ENCODE measurements at regions of chr3 and their contacts with region 1.

Region 1: GRCh38 chr3:19543212-19543841 is 390.7 kb downstream of the EFHB start:
- DNase-seq: peak; percentile 21
- ATAC-seq: peak; percentile 57
- H3K4me3 Mint-ChIP-seq: peak overlapping the region; percentile 21
- H3K27ac Mint-ChIP-seq: peak overlapping the region; percentile 95
- H3K4me1 Mint-ChIP-seq: peaks cover 69% of the 10 kb centered on the region
- H3K27me3 Mint-ChIP-seq: no peaks in the 10 kb centered on the region
- CTCF ChIP-seq: peak; percentile 27

Region 2: GRCh38 chr3:18559331-18559842 is 983.9 kb before region 1 on chr3:
- CTCF ChIA-PET with region 1: no interaction called
- POLR2A ChIA-PET with region 1: no interaction called
- intact Hi-C with region 1: loop called (anchors 5 kb)
- DNase-seq: no peak
- ATAC-seq: peak; percentile 65
- H3K4me3 Mint-ChIP-seq: no peak overlapping the region
- H3K27ac Mint-ChIP-seq: no peak overlapping the region
- H3K4me1 Mint-ChIP-seq: peaks cover 27% of the 10 kb centered on the region
- H3K27me3 Mint-ChIP-seq: no peaks in the 10 kb centered on the region
- CTCF ChIP-seq: no peak

Region 3: GRCh38 chr3:19046440-19046839 is 496.9 kb before region 1 on chr3:
- CTCF ChIA-PET with region 1: no interaction called
- POLR2A ChIA-PET with region 1: no interaction called
- intact Hi-C with region 1: loop called (anchors 1 kb)
- DNase-seq: no peak
- ATAC-seq: no peak
- H3K4me3 Mint-ChIP-seq: no peak overlapping the region
- H3K27ac Mint-ChIP-seq: no peak overlapping the region
- H3K4me1 Mint-ChIP-seq: no peaks in the 10 kb centered on the region
- H3K27me3 Mint-ChIP-seq: no peaks in the 10 kb centered on the region
- CTCF ChIP-seq: no peak

Region 4: GRCh38 chr3:19146685-19147650 is 396.4 kb before region 1 on chr3:
- CTCF ChIA-PET with region 1: interaction called, 9 read pairs
- POLR2A ChIA-PET with region 1: no interaction called
- intact Hi-C with region 1: loop called (anchors 1 kb)
- DNase-seq: peak; percentile 64
- ATAC-seq: peak; percentile 73
- H3K4me3 Mint-ChIP-seq: peak overlapping the region; percentile 95
- H3K27ac Mint-ChIP-seq: peak overlapping the region; percentile 85
- H3K4me1 Mint-ChIP-seq: peaks cover 14% of the 10 kb centered on the region
- H3K27me3 Mint-ChIP-seq: peaks cover 9% of the 10 kb centered on the region
- CTCF ChIP-seq: no peak

Region 5: DNA sequence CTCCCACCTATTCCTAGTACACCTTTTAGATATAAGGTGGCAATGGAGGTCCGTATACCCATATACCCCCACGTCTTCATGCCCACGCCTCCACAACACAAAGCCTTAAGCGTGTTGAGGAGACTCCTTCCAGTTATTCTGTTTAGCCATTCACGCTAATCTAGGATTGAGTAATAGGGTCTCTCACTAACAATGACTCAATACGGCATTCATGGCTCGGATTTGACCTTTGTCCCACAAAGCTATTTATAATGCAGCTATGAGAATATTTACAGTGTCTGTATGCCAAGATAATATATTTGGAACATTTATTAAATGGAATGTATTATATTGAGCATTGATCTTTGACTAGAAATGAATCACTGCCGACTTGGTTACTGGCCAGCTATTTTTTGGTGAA is 179.2 kb before region 1 on chr3:
- CTCF ChIA-PET with region 1: interaction called, 3 read pairs
- POLR2A ChIA-PET with region 1: no interaction called
- intact Hi-C with region 1: loop called (anchors 5 kb)
- DNase-seq: no peak
- ATAC-seq: no peak
- H3K4me3 Mint-ChIP-seq: no peak overlapping the region
- H3K27ac Mint-ChIP-seq: peak overlapping the region; percentile 25
- H3K4me1 Mint-ChIP-seq: peaks cover 39% of the 10 kb centered on the region
- H3K27me3 Mint-ChIP-seq: no peaks in the 10 kb centered on the region
- CTCF ChIP-seq: no peak

Region 6: DNA sequence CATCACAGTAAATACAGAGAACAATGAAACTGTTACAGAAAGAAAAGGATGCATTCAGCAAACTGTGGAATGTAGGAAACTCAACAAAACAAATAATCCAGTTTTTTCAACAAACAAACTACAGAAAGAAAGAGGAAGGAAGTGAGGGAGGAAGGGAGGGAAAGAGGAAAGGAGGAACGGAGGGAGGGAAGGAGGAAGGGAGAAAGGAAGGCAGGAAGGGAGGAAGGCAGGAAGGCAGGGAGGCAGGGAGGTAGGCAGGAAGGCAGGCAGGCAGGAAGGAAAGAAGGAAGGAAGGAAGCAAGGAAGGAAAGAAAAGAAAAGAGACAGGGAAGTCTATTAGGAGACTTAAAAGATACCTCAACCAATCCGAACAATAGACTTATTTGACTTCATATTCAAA is 255.0 kb after region 1 on chr3:
- CTCF ChIA-PET with region 1: no interaction called
- POLR2A ChIA-PET with region 1: no interaction called
- intact Hi-C with region 1: no loop called
- DNase-seq: no peak
- ATAC-seq: no peak
- H3K4me3 Mint-ChIP-seq: no peak overlapping the region
- H3K27ac Mint-ChIP-seq: no peak overlapping the region
- H3K4me1 Mint-ChIP-seq: no peaks in the 10 kb centered on the region
- H3K27me3 Mint-ChIP-seq: no peaks in the 10 kb centered on the region
- CTCF ChIP-seq: no peak

Region 7: DNA sequence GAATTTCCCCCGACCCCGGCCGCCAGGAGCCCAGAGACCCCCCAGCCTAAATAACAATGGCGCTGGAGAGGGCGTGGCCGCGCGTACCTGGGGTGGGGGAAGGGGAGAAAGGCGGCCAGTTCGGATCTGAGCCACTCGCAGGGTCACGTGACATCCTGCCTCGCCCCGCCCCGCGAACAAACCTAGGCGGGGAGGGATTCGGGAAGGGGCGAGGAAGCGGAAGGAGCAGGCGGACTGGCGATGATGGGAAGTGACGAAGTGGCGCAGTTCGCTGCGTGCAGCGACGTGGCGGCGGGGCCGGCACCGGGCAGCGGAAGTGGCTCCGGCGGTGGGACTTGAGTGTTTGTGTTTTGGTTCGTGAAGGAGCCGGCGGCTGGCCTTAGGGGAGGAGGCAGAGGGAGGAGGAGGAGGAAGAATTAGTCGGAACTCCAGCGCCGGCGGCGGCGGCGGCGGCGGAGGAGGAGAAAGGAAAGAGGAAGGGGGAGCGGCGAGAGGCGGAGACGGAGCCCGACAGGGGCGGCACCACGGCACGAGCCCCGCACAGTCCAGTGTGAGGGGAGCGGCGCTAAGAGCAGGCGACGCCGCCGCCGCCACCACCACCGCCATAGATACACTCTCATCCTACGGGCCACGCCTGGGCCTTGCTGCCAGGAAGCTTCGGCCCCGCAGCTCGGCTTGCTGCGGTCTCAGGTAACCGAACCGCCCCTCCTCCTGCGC is 403.7 kb after region 1 on chr3 and contains the start of gene RAB5A:
- CTCF ChIA-PET with region 1: no interaction called
- POLR2A ChIA-PET with region 1: no interaction called
- intact Hi-C with region 1: loop called (anchors 5 kb)
- DNase-seq: peak; percentile 95
- ATAC-seq: peak; percentile 87
- H3K4me3 Mint-ChIP-seq: peak within 1 kb of the TSS; percentile 94
- H3K27ac Mint-ChIP-seq: peak within 1 kb of the TSS; percentile 96
- H3K4me1 Mint-ChIP-seq: peaks cover 47% of the 10 kb centered on the region
- H3K27me3 Mint-ChIP-seq: no peaks in the 10 kb centered on the region
- CTCF ChIP-seq: no peak
- total RNA-seq, gene RAB5A: 43.2 and 45.2 TPM in 2 replicates

Region 8: DNA sequence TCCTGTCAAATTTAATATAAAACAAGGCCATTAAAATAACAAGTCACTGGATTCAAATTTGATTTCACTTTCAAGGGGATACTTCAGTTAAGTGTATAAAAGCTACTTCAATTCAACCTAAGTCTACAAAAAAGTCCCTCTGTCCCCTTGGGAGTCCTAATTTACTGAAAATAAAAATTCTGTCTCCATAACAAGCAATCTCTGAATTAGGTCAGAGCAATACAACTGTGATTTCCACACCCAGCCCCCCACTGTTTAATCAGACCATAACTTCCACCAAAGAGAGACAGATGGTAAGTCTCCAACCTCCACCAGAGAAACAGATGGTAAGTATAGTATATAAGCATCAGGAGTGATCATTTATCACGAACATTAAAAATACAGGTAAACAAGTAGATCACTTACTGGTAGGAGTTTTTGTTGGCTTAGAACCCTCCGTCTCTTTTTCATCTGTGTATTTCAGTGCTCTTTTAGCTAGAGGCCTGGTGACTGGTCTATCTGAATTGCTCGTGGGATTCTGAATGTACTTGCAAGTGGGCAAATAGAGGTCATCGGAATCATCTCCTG is 630.6 kb after region 1 on chr3:
- CTCF ChIA-PET with region 1: no interaction called
- POLR2A ChIA-PET with region 1: no interaction called
- intact Hi-C with region 1: no loop called
- DNase-seq: no peak
- ATAC-seq: peak; percentile 50
- H3K4me3 Mint-ChIP-seq: no peak overlapping the region
- H3K27ac Mint-ChIP-seq: no peak overlapping the region
- H3K4me1 Mint-ChIP-seq: peaks cover 13% of the 10 kb centered on the region
- H3K27me3 Mint-ChIP-seq: no peaks in the 10 kb centered on the region
- CTCF ChIP-seq: no peak